ENCODE measurements at regions of chr1 and their contacts with region 1.

Region 1: GRCh38 chr1:202192770-202193613 is 607 bp upstream of the LGR6 start:
- DNase-seq: no peak

Region 2: DNA sequence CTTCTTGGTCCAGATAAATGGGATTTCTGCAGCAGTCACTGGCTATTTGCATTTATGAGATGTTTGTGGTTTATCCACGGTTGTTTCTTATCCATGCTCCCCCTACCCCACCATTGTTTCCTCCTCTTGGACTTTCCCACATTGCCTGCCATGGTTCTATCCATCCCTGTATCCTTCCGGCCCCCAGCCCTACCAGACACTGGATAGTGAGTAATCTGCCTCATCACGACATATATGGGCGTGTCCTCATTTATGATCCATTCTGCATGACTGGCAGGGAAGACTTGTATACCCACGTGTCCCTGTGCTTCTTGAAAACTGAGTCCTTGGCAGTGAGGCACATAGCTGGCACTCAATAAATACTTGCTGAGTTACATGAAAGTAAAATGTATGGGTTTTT is 1120.8 kb before region 1 on chr1:
- intact Hi-C with region 1: no loop called
- DNase-seq: no peak

Region 3: GRCh38 chr1:201766131-201766866 is 426.7 kb before region 1 on chr1:
- intact Hi-C with region 1: no loop called
- DNase-seq: no peak

Region 4: DNA sequence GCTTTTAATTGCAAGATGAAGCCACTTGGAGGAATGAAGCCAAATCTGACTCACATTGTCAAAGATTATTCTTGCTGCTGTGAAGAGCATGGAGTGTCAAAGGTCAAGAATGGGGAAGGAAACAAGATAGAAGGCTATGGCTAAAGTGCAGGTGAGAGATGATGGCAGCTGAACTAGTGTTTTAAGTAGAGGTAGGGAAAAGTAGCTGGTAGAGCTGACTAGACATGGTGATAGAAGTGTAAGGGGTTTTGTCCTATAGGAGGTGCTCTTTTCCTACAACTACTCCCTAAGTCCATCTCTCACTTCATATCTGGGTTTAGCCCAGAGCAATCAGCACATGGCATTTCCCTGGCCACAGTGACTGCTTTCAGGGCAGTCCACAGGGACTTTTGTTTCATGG is 136.9 kb after region 1 on chr1:
- intact Hi-C with region 1: no loop called
- DNase-seq: no peak

Region 5: GRCh38 chr1:203026031-203026989 is 833.3 kb after region 1 on chr1 and contains the start of gene PPFIA4:
- intact Hi-C with region 1: loop called in 1 of 2 experiments (anchors 5 kb)
- DNase-seq: peak; percentile 95
- total RNA-seq, gene PPFIA4: 2.0 to 3.1 TPM

Measured in posterior vena cava (tissue), 2 donors.